Activated B cell treated with CpG ODN at 0.5 μM for 24 hours (primary cell): ENCODE measurements at regions of chr21 and their contacts with region 1.

Region 1: GRCh38 chr21:36141513-36141925 is 6.6 kb downstream of the CBR3 start:
- DNase-seq: peak; percentile 49
- ATAC-seq: peak; percentile 88
- H3K4me3 Mint-ChIP-seq: no peak overlapping the region
- H3K27ac Mint-ChIP-seq: no peak overlapping the region
- H3K4me1 Mint-ChIP-seq: peaks cover 23% of the 10 kb centered on the region
- H3K27me3 Mint-ChIP-seq: no peaks in the 10 kb centered on the region
- CTCF ChIP-seq: peak; percentile 74

Region 2: GRCh38 chr21:36069713-36070573 is 71.6 kb before region 1 on chr21 and contains the start of gene CBR1:
- CTCF ChIA-PET with region 1: no interaction called
- POLR2A ChIA-PET with region 1: no interaction called
- intact Hi-C with region 1: no loop called
- DNase-seq: peak; percentile 86
- ATAC-seq: peak; percentile 99
- H3K4me3 Mint-ChIP-seq: peak within 1 kb of the TSS; percentile 90
- H3K27ac Mint-ChIP-seq: peak within 1 kb of the TSS; percentile 87
- H3K4me1 Mint-ChIP-seq: peaks cover 31% of the 10 kb centered on the region
- H3K27me3 Mint-ChIP-seq: no peaks in the 10 kb centered on the region
- CTCF ChIP-seq: no peak
- total RNA-seq, gene CBR1: 17.5 and 20.3 TPM in 2 replicates

Region 3: GRCh38 chr21:36209626-36210171 is 68.2 kb after region 1 on chr21:
- CTCF ChIA-PET with region 1: interaction called, 22 read pairs
- POLR2A ChIA-PET with region 1: no interaction called
- intact Hi-C with region 1: loop called (anchors 1 kb)
- DNase-seq: no peak
- ATAC-seq: no peak
- H3K4me3 Mint-ChIP-seq: no peak overlapping the region
- H3K27ac Mint-ChIP-seq: no peak overlapping the region
- H3K4me1 Mint-ChIP-seq: peaks cover 3% of the 10 kb centered on the region
- H3K27me3 Mint-ChIP-seq: no peaks in the 10 kb centered on the region
- CTCF ChIP-seq: no peak

Region 4: GRCh38 chr21:36419996-36420395 is 278.5 kb after region 1 on chr21:
- CTCF ChIA-PET with region 1: no interaction called
- POLR2A ChIA-PET with region 1: no interaction called
- intact Hi-C with region 1: loop called (anchors 5 kb)
- DNase-seq: peak; percentile 29
- ATAC-seq: peak; percentile 71
- H3K4me3 Mint-ChIP-seq: no peak overlapping the region
- H3K27ac Mint-ChIP-seq: no peak overlapping the region
- H3K4me1 Mint-ChIP-seq: no peaks in the 10 kb centered on the region
- H3K27me3 Mint-ChIP-seq: no peaks in the 10 kb centered on the region
- CTCF ChIP-seq: no peak

Region 5: GRCh38 chr21:36630485-36631206 is 489.1 kb after region 1 on chr21:
- CTCF ChIA-PET with region 1: no interaction called
- POLR2A ChIA-PET with region 1: no interaction called
- intact Hi-C with region 1: loop called (anchors 5 kb)
- DNase-seq: peak; percentile 27
- ATAC-seq: no peak
- H3K4me3 Mint-ChIP-seq: no peak overlapping the region
- H3K27ac Mint-ChIP-seq: no peak overlapping the region
- H3K4me1 Mint-ChIP-seq: no peaks in the 10 kb centered on the region
- H3K27me3 Mint-ChIP-seq: peaks cover 10% of the 10 kb centered on the region
- CTCF ChIP-seq: peak; percentile 38

Region 6: DNA sequence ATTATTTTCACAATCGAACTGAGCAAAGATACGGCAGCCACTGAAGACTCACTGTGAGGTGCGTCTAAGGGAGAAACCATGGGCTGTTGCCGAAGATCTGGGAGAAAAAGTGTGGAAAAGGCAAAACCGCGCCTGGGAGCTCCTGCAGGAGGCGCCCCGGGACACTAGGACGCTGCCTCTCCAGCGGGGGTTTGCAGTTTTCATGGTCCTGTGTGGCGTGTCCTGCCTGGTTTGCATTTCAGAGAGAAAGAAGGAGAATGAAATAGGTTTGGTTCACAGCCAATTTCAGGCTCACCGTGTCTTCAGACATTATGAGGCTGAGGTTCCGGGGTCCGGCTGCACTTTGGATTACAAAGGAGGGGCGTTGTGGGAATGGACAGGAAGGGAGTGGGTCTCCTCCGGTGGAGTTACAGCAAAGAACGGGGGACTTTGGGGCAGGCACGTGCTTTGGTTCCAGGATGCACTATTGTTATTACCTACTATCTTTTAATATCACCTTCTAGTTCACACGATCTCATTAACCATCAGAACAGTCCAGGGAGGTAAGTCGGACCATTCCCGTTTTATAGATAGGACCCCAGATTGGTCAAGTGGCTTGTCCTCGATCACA is 1404.9 kb after region 1 on chr21:
- CTCF ChIA-PET with region 1: no interaction called
- POLR2A ChIA-PET with region 1: no interaction called
- intact Hi-C with region 1: no loop called
- DNase-seq: no peak
- ATAC-seq: no peak
- H3K4me3 Mint-ChIP-seq: no peak overlapping the region
- H3K27ac Mint-ChIP-seq: no peak overlapping the region
- H3K4me1 Mint-ChIP-seq: peaks cover 15% of the 10 kb centered on the region
- H3K27me3 Mint-ChIP-seq: peaks cover 39% of the 10 kb centered on the region
- CTCF ChIP-seq: no peak